ENCODE measurements at regions of chr15 and their contacts with region 1.

Region 1: DNA sequence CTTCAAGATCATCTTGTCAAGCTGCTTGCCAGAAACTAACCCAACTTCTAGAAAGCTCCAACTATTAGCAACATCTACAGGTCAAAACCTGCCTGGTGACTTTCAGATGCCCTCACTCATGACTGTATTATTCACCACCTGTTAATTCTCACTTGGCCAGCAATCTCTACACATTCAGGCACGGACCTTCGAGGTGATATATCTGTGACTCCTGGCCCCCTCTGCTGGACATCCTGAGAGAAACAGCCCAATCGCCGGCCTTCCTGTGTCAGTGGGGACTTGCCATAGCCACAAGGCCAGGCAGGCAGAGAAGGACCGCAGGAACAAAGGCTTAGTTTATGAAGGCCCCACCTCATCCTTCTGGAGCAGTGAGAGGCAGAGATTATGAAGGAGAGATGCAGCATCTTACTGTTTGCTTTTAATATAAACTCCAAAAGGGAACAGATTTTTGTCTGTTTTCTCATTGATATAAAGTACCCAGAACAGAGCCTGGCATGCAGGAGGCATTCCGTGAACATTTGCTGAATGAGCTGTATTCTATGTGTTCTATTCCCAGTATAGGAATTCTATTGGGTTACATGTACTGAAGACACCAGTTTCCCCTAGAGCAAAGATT is 24.4 kb upstream of the OCA2 start:
- DNase-seq: no peak
- ATAC-seq: peak; percentile 56
- H3K4me3 Mint-ChIP-seq: no peak overlapping the region
- H3K27ac Mint-ChIP-seq: no peak overlapping the region
- H3K4me1 Mint-ChIP-seq: peaks cover 9% of the 10 kb centered on the region
- H3K27me3 Mint-ChIP-seq: no peaks in the 10 kb centered on the region
- CTCF ChIP-seq: no peak

Region 2: GRCh38 chr15:28086175-28086703 is 37.3 kb before region 1 on chr15:
- CTCF ChIA-PET with region 1: interaction called, 6 read pairs
- POLR2A ChIA-PET with region 1: no interaction called
- intact Hi-C with region 1: loop called (anchors 1 kb)
- DNase-seq: no peak
- ATAC-seq: peak; percentile 100
- H3K4me3 Mint-ChIP-seq: no peak overlapping the region
- H3K27ac Mint-ChIP-seq: no peak overlapping the region
- H3K4me1 Mint-ChIP-seq: peaks cover 12% of the 10 kb centered on the region
- H3K27me3 Mint-ChIP-seq: peaks cover 38% of the 10 kb centered on the region
- CTCF ChIP-seq: no peak

Region 3: GRCh38 chr15:28786521-28786920 is 663.0 kb after region 1 on chr15:
- CTCF ChIA-PET with region 1: no interaction called
- POLR2A ChIA-PET with region 1: no interaction called
- intact Hi-C with region 1: loop called (anchors 5 kb)
- DNase-seq: no peak
- ATAC-seq: no peak
- H3K4me3 Mint-ChIP-seq: no peak overlapping the region
- H3K27ac Mint-ChIP-seq: no peak overlapping the region
- H3K4me1 Mint-ChIP-seq: peaks cover 2% of the 10 kb centered on the region
- H3K27me3 Mint-ChIP-seq: peaks cover 17% of the 10 kb centered on the region
- CTCF ChIP-seq: no peak

Measured in activated B cell treated with CpG ODN at 0.5 μM for 24 hours (primary cell).